ENCODE measurements at regions of chr9 and their contacts with region 1.

Region 1: GRCh38 chr9:32550562-32551433 is 1.3 kb upstream of the SMIM27 start:
- DNase-seq: peak; percentile 93
- ATAC-seq: peak; percentile 89

Region 2: GRCh38 chr9:32344551-32345182 is 206.1 kb before region 1 on chr9:
- intact Hi-C with region 1: no loop called
- DNase-seq: no peak
- ATAC-seq: no peak

Region 3: DNA sequence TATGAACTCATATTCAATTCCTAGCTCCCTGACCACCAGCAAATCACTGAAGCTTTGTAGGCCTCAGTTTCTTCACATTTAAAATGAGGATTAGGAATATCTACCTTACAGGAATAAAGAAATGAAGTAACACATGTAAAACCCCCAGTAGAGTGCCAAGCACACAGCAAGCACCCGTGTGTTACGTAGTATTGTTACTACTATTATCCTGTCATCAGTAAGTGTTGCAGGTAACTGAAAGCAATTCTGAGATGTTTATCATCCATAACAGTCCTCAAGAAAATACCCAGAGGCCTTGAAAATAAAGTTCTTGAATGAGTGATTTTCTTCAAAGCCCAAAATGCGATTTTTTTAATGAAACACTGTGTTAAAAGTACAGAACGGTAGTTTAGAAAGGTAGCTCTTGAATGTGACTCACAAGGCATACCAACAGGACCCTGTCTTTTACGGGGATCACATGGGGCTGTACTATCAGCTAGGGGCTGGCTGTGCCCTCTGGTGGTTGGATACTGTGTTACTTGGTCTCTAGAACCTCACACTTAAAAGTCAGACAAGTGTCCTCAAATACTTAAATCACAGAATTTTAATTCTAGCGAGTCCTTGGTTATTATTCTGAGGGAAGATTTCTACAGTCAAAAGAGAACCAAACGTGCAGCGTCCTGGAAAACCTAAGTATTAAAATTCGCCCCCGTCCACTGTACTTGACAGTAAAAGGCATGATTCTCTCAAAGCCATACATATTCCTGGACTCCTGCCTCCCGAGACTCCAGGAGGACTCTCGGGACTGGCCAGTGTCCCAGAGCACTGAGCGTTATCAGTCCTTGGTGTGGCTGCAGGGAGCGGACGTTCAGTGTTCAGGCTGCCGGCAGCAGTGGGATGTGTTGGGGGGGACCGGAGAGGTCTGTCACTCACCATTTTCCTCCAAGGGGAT is 21.4 kb after region 1 on chr9:
- intact Hi-C with region 1: loop called in 1 of 2 experiments (anchors 2 kb)
- DNase-seq: peak; percentile 56
- ATAC-seq: peak; percentile 81 to 91

Region 4: DNA sequence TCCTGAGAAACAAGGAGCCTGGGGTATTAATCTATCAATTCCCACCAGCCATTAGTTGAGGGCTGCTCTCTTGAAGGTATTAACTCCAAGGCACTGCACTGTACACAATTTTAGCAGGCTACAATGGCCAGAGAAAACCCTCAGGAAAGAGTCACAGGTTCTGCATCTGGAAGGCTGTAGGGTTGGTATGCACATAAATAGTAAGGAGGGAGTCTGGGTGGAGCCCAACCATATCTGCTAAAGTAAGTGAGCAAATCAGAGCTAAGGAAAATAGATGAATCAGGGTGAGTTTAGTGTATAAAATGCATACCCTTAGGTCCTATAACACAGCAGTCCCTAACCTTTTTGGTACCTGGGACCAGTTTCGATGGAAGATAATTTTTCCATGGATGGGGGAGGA is 250.7 kb after region 1 on chr9:
- intact Hi-C with region 1: no loop called
- DNase-seq: no peak
- ATAC-seq: no peak

Measured in left cardiac atrium (tissue), 4 donors.